GM23248 (cell line): ENCODE measurements at regions of chr15 and their contacts with region 1.

Region 1: GRCh38 chr15:89750560-89751542 is at the start of gene MESP1:
- DNase-seq: peak; percentile 97
- H3K4me3 ChIP-seq: peak within 1 kb of the TSS; percentile 83
- H3K27ac ChIP-seq: no peak within 1 kb of the TSS
- H3K4me1 ChIP-seq: no peaks in the 10 kb centered on the region
- H3K27me3 ChIP-seq: peaks cover 11% of the 10 kb centered on the region; the same call in 1 of the 2 replicates
- total RNA-seq, gene MESP1: not detected in 2 replicates

Region 2: DNA sequence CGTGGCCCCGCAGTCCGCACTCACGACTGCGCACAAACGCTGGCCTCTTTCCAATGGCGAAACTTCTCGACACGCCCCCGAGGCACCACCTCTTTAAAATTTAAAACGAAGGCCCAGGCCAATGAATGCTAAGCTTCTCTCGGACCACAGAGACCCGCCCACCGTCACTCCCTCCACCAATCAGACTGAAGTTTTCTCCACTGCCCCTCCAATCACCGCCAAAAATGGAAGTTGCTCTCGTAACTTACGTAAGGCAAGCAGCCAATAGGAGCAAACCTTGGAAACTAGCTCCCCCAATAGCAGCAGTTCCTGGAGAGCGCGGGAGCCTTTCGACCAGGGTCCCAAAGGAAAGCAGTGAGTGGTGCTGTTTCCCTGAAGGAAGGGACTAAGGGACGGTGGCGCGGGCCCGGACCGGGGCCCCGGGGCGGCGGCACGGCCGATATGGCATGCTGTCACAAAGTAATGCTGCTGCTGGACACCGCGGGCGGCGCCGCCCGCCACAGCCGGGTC is 175.7 kb before region 1 on chr15 and contains the start of gene TICRR:
- in situ Hi-C with region 1: no loop called
- DNase-seq: peak; percentile 100
- H3K4me3 ChIP-seq: peak within 1 kb of the TSS; percentile 76
- H3K27ac ChIP-seq: peak within 1 kb of the TSS; percentile 60
- H3K4me1 ChIP-seq: no peaks in the 10 kb centered on the region
- H3K27me3 ChIP-seq: no peaks in the 10 kb centered on the region
- total RNA-seq, gene TICRR: 2.3 and 2.4 TPM in 2 replicates

Region 3: DNA sequence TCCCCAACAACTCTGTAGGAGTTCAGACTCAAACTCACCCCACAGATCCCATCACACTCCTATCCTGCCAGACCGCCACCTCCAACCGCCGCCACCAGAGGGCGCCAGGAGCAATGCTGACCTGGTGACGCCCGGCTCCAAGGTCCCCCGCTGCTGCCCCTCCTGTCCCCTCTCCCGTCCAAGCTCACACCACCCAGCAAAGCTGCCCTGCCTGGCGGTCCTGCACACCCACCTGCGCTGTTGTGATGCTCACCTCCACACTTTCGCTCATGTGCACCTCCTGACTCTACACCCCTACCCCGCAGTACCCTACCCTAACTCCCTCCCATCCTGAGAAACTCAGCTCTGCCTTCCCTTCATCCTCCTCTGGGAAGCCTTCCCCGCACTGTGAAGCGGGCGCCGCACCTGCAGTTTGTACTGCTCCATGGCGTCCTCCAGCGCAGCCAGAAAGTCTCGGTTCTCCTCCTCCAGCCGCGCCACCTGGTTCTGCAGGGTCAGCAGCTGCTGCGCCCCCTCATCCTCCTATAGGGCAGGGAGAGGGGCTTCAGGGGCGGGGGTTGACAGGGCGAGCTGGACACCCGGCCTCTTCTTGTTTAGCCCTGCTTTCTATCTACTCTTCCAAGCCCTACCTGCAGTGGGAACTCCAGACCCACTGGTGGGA is 103.5 kb before region 1 on chr15:
- in situ Hi-C with region 1: no loop called
- DNase-seq: peak; percentile 69
- H3K4me3 ChIP-seq: no peak overlapping the region
- H3K27ac ChIP-seq: no peak overlapping the region
- H3K4me1 ChIP-seq: no peaks in the 10 kb centered on the region
- H3K27me3 ChIP-seq: no peaks in the 10 kb centered on the region

Region 4: DNA sequence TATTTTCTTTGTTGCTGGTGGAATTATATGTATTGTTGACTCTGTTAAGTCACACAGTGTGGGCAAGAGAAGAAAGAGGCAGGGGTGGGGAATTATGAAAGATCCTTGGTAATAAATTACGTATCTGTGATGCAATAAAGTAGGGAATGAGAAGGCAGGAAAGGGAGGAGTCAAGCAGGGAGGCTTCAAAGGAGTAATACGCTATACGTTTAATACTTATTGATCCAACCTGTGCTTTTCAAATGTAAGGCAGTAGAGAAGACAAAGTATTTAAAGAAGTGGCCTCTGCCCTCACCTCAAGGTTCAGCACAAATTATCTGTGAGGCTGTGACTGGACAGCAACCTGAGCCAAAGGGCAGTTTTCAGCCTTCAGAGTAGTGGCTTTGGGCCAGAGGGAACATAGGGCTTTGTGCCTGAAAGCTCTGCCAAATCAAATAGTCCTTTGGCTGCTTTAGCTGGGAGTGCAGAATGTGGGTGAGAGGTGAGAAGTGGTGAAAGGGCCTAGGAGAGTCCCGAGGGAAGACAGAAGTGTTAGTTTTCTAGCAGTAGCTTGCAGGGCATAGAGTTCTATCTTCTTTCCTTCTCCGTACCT is 70.5 kb before region 1 on chr15:
- in situ Hi-C with region 1: no loop called
- DNase-seq: peak; percentile 85
- H3K4me3 ChIP-seq: no peak overlapping the region
- H3K27ac ChIP-seq: no peak overlapping the region
- H3K4me1 ChIP-seq: peaks cover 16% of the 10 kb centered on the region
- H3K27me3 ChIP-seq: no peaks in the 10 kb centered on the region

Region 5: DNA sequence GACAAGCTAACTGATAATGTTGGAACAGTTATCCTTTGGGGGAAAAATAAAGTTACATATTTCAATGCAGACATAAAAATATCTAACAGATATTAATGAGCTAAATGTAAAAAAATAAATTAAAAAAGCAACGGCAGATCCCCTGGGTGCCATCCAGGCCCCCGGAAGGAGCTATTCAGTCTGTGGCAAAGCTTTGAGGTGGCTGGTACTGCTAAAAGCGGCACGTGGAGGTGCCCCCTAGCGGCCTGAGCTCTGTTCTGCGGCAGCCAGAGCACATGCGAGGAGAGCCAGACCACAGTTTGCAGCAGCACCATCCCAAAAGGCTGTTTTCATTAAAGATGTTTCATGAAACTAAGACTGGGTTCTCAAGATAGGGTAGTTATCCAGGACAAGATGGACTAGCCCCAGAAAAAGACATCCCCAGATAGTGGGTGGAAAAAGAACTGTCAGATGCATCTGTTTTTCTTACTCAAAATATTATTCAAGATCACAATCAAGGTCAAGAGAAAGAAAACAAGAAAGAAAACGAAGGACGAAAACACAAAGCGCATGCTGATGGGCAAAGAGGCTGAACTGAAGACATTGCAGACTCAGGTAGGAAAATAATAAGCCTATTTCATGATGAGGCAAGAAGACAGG is 124.2 kb after region 1 on chr15:
- in situ Hi-C with region 1: loop called (anchors 5 kb)
- DNase-seq: peak; percentile 89
- H3K4me3 ChIP-seq: no peak overlapping the region
- H3K27ac ChIP-seq: no peak overlapping the region
- H3K4me1 ChIP-seq: 0 out of 2 replicates have a peak, but pooled peaks cover 2% of the 10 kb centered on the region
- H3K27me3 ChIP-seq: no peaks in the 10 kb centered on the region

Region 6: GRCh38 chr15:90071208-90071807 is 320.5 kb after region 1 on chr15:
- in situ Hi-C with region 1: loop called (anchors 25 kb)
- DNase-seq: peak; percentile 90
- H3K4me3 ChIP-seq: no peak overlapping the region
- H3K27ac ChIP-seq: no peak overlapping the region
- H3K4me1 ChIP-seq: no peaks in the 10 kb centered on the region
- H3K27me3 ChIP-seq: no peaks in the 10 kb centered on the region